BJ (cell line): ENCODE measurements at regions of chr12 and their contacts with region 1.

Region 1: GRCh38 chr12:80234667-80235066 is 135.3 kb downstream of the OTOGL start:
- DNase-seq: no peak
- H3K4me3 ChIP-seq: no peak overlapping the region
- H3K27me3 ChIP-seq: no peaks in the 10 kb centered on the region
- CTCF ChIP-seq: no peak

Region 2: DNA sequence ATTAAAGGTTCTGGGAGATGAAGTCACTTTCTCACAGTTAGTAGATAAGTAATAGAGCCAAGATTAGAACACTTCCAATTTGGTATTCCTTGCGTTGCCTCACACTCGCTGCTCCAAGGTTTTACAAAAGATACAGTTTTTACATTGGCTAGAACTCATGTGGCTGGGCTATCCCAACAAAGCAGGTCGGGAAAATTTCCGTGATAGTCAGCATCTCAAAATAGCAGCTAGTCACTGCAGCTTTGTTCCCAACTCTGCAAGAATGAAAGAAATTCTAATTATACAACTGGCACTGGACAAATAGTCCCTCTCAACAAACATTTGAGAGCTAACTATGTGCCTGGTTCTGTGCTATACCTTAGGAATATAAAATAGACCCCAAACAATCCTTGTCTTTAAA is 275.2 kb before region 1 on chr12:
- CTCF ChIA-PET with region 1: no interaction called
- POLR2A ChIA-PET with region 1: no interaction called
- DNase-seq: no peak
- H3K4me3 ChIP-seq: no peak overlapping the region
- H3K27me3 ChIP-seq: no peaks in the 10 kb centered on the region
- CTCF ChIP-seq: no peak

Region 3: DNA sequence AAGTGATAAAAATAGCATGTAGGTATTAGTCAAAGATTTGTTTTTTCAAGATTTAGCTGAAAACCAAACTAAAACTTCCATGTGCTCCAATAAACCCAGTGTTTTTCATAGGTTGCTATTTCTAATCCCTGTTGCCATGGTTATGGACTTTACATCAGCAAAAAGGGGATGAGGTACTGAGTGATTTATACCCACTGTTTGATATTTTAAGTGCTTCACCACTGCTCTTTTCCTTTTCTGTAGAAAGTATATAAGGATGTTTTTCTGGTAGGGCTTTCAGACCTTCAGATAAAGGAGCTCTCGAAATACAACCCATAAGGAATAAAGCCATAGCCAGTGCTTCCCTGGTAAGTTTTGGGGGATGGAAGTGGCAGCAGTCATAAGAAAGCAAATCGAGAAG is 135.4 kb before region 1 on chr12 and contains the start of gene OTOGL:
- CTCF ChIA-PET with region 1: no interaction called
- POLR2A ChIA-PET with region 1: interaction called, 19 read pairs
- DNase-seq: no peak
- H3K4me3 ChIP-seq: no peak within 1 kb of the TSS
- H3K27me3 ChIP-seq: no peaks in the 10 kb centered on the region
- CTCF ChIP-seq: no peak
- polyA plus RNA-seq, gene OTOGL: 0.10 TPM in 2 replicates

Region 4: DNA sequence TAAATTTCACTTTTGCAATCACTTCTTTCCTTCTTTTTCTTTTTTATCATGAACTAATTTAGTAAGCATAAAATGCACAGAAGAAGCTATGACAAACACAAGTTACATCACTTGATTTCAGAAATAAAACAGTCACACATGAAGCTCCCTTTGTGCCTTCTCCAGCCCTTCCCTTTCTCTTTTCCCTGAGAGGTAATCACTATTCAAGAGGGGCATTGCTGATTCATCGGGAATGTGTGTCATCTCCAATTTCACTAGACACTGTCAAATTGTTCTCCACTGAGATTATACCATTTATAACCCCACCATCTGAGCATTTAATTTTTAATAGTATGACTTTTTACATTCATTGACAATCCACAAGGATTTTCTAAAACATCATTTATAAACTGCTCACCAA is 117.8 kb after region 1 on chr12:
- CTCF ChIA-PET with region 1: no interaction called
- POLR2A ChIA-PET with region 1: no interaction called
- DNase-seq: no peak
- H3K4me3 ChIP-seq: no peak overlapping the region
- H3K27me3 ChIP-seq: no peaks in the 10 kb centered on the region
- CTCF ChIP-seq: no peak